ENCODE measurements at regions of chr6 and their contacts with region 1.

Region 1: DNA sequence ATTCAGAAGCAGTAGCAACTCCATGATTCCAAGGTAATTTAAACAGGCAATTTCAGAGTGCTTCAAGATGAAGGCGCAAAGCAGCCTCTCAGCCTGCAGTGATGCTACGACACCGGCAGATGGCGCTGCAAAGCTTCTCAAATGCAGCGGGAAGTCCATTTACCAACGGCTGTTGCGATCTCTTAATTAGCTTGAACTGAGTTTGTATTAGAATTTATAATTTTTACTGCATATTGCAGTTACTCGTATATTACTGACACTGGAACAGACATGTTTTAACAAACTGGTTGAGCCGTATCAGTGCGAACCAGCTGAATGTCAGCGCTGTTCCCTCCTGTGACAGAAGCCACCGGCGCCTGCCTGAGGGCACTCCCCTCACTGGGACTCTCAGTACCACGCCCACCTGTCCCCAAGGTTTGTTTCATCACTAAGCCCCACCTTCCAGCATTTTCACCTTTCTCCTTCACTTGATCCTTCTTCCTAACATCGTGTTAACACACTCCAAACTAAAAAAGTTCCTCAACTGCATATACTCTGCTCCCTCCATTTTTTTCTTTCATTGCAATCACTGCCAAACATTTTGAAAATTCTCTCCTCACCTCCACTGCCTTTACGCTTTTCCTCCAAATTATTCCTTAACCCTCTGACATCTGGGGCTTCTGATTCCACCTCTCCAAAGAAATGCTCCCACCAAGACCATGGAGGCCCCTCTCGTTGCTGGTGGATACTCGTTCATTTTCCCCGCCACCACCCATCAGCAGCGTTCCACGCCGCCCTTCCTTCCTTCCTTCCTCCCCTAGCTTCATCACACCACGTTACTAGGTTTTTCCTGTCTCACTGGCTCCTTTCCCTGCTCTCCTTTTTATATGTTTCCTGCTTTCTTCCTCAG is 14.5 kb downstream of the GNL1 start:
- DNase-seq: peak; percentile 62
- ATAC-seq: peak; percentile 88
- H3K4me3 ChIP-seq: peak overlapping the region; percentile 60
- H3K27ac ChIP-seq: no peak overlapping the region
- H3K4me1 ChIP-seq: peaks cover 7% of the 10 kb centered on the region; the same call in 1 of the 2 replicates
- H3K27me3 ChIP-seq: no peaks in the 10 kb centered on the region
- CTCF ChIP-seq: peak; percentile 94 to 99 (median 96)
- EP300 ChIP-seq: no peak
- POLR2A ChIP-seq: no peak
- RAD21 ChIP-seq: peak; percentile 68

Region 2: DNA sequence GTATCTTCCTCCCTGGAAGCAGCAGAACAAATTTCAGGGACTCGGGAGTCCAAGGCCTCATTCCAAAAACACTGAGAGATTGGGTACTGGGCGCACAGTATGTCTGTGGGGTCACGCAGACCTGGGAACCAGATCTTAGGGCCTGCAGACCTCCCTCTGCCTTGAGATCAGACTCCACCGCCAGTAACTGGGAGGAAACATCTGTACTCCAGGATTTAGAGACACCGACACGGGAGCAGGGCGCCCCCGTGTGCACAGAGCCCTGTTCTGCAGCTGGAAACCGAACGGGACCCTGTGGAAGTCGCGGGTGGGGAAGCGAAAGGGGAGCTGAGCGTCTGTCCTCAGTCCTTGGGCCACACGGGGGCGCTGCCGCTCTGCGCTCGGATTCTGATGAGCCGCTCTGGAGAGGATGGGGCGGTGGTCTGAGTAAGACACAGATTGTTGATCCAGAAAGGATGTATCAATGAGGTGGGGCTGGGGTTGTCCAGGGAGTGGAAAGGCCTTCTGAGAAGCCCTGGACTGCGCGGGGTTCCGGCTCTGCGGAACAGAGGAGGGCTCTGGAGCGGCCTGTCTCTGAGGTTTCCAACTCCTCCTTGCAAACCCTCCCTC is 88.1 kb before region 1 on chr6:
- CTCF ChIA-PET with region 1: interaction called, 16 read pairs
- POLR2A ChIA-PET with region 1: interaction called, 3 read pairs
- RAD21 ChIA-PET with region 1: interaction called, 4 read pairs
- SMC1A ChIA-PET with region 1: interaction called, 4 read pairs
- in situ Hi-C with region 1: no loop called
- intact Hi-C with region 1: no loop called
- DNase-seq: no peak
- ATAC-seq: peak; percentile 94
- H3K4me3 ChIP-seq: no peak overlapping the region
- H3K27ac ChIP-seq: no peak overlapping the region
- H3K4me1 ChIP-seq: peaks cover 18% of the 10 kb centered on the region
- H3K27me3 ChIP-seq: peaks cover 13 to 23% of the 10 kb centered on the region in 2 experiments
- CTCF ChIP-seq: peak; percentile 54 to 78 (median 65)
- EP300 ChIP-seq: no peak
- POLR2A ChIP-seq: no peak
- RAD21 ChIP-seq: peak; percentile 53

Region 3: DNA sequence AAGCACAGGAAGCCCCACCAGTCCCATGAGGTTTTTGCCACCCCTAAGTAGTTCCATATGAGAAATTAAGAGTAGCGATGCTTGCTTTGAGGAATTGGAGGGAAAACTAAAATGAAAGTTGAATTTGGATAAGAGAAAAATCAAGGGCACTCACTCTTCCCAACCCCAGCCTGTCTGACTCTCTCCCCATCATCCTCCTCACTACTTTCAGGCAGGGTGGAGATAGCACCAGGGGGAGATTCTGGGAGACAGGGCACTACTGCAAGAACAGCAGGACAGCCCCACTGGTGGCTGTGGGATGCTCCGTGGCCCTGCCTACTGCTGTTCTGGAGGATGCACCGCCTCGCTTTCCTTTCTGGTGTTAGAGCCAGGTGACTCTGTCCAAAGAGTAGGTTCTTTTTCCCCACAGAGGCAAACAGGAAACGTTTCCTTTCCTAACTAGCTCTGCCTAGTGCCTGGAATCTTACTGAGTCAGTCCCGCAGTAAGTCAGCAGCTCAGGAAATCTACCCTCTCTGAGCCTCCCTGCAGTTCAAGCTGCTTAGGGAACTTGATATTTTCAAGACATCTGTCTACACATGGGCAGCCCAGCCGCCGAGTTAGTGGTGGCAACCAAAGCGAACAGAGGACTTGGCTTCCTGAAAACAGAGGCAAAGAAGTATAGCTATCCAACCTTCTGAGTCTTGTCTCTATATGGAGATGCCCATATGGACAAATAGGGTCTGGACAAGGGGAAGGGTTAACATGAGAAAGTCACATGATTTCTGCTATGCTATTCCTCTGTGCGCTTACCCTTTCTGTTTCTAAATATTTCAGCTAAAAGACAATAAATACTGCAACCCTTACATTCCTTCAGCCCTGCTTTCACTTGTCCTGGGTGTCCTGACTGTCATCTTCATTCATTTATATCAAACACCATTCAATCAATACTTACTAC is 41.1 kb before region 1 on chr6:
- CTCF ChIA-PET with region 1: interaction called, 20 read pairs
- POLR2A ChIA-PET with region 1: interaction called, 3 read pairs
- RAD21 ChIA-PET with region 1: interaction called, 3 read pairs
- SMC1A ChIA-PET with region 1: interaction called, 6 read pairs
- in situ Hi-C with region 1: no loop called
- intact Hi-C with region 1: no loop called
- DNase-seq: no peak
- ATAC-seq: peak; percentile 29
- H3K4me3 ChIP-seq: no peak overlapping the region
- H3K27ac ChIP-seq: no peak overlapping the region
- H3K4me1 ChIP-seq: peaks cover 9% of the 10 kb centered on the region
- H3K27me3 ChIP-seq: no peaks in the 10 kb centered on the region; a peak in 1 of 4 replicates
- CTCF ChIP-seq: no peak
- EP300 ChIP-seq: no peak
- POLR2A ChIP-seq: no peak
- RAD21 ChIP-seq: no peak

Region 4: DNA sequence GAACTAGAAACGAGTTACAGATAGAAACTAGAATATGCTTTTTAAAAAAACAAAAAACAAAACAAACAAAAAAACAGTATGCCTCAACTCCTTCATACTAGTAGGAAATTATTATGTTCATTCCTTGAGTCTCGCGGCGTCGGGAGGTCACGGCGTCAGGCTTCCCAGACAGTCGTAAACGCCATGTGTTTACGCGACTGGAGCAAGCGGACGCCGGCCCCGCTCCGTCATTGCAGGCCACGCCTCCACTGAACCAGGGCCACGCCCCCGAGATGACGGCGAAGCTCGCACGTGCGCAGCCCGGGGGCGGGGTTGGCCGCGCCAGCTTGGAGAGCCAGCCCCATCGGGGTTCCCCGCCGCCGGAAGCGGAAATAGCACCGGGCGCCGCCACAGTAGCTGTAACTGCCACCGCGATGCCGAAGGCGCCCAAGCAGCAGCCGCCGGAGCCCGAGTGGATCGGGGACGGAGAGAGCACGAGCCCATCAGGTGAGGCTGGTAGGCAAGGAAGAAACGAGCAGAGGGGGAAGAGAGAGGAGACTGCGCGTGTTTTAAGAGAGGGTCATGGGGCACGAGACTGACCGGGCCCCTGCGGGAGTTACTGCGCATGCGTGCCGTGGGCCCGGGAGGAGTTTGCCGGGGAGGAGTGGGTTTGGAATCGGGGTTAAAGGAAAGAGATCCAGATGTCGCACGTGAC is 29.5 kb after region 1 on chr6 and contains the start of gene ABCF1:
- CTCF ChIA-PET with region 1: interaction called, 25 read pairs
- POLR2A ChIA-PET with region 1: no interaction called
- RAD21 ChIA-PET with region 1: interaction called, 11 read pairs
- SMC1A ChIA-PET with region 1: interaction called, 4 read pairs
- in situ Hi-C with region 1: no loop called
- intact Hi-C with region 1: no loop called
- DNase-seq: peak; percentile 85
- ATAC-seq: peak; percentile 94
- H3K4me3 ChIP-seq: peak within 1 kb of the TSS; percentile 89
- H3K27ac ChIP-seq: peak within 1 kb of the TSS; percentile 94
- H3K4me1 ChIP-seq: peaks cover 15% of the 10 kb centered on the region
- H3K27me3 ChIP-seq: no peaks in the 10 kb centered on the region
- CTCF ChIP-seq: no peak
- EP300 ChIP-seq: 0 out of 4 replicates have a peak, but pooled peaks of 1 of the 2 experiments have one; percentile 23
- POLR2A ChIP-seq: peak; percentile 96
- RAD21 ChIP-seq: no peak
- polyA plus RNA-seq, gene ABCF1: 21.3 to 26.1 TPM

Region 5: GRCh38 chr6:30616811-30617564 is 75.2 kb after region 1 on chr6 and contains the start of gene PPP1R10:
- CTCF ChIA-PET with region 1: interaction called, 17 read pairs
- POLR2A ChIA-PET with region 1: interaction called, 3 read pairs
- RAD21 ChIA-PET with region 1: interaction called, 8 read pairs
- SMC1A ChIA-PET with region 1: interaction called, 6 read pairs
- in situ Hi-C with region 1: no loop called
- intact Hi-C with region 1: no loop called
- DNase-seq: peak; percentile 100
- ATAC-seq: peak; percentile 81
- H3K4me3 ChIP-seq: peak within 1 kb of the TSS; percentile 80
- H3K27ac ChIP-seq: peak within 1 kb of the TSS; percentile 99
- H3K4me1 ChIP-seq: peaks cover 3% of the 10 kb centered on the region
- H3K27me3 ChIP-seq: no peaks in the 10 kb centered on the region
- CTCF ChIP-seq: no peak
- EP300 ChIP-seq: no peak; a peak in 1 of 4 replicates
- POLR2A ChIP-seq: peak; percentile 97
- RAD21 ChIP-seq: no peak
- polyA plus RNA-seq, gene PPP1R10: 11.3 to 22.6 TPM

Region 6: DNA sequence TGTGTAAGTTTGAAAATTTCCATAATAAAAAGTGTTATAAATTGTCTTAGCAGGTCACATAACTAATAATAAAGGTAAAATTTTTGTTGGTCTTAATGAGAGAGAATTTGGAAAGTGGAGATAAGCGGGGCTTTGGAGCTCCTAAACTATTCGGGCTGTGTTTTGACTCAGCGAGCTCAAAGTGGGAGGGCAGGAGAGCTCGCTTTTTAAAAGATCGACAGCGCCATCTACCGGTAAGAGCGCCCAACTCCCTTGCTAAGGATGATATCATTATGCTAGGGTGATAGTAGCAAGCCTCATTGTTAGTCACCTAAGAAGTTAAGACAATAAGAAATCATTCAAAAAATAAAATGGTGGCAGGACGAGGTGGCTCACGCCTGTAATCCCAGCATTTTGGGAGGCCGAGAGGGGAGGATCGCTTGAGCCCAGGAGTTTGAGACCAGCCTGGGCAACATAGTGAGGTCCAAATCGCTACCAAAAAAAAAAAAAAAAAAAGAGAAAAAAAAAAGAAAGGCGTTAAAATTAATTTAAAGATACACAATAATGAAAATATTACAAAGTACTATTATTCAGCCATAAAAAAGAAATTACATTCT is 545.8 kb after region 1 on chr6:
- CTCF ChIA-PET with region 1: interaction called, 14 read pairs
- POLR2A ChIA-PET with region 1: no interaction called
- RAD21 ChIA-PET with region 1: interaction called, 6 read pairs
- SMC1A ChIA-PET with region 1: interaction called, 8 read pairs
- in situ Hi-C with region 1: no loop called
- intact Hi-C with region 1: loop called (anchors 2 kb)
- DNase-seq: peak; percentile 25
- ATAC-seq: peak; percentile 98
- H3K4me3 ChIP-seq: no peak overlapping the region
- H3K27ac ChIP-seq: no peak overlapping the region
- H3K4me1 ChIP-seq: no peaks in the 10 kb centered on the region
- H3K27me3 ChIP-seq: no peaks in the 10 kb centered on the region; a peak in 1 of 4 replicates
- CTCF ChIP-seq: peak; percentile 67 to 72 (median 71)
- EP300 ChIP-seq: no peak
- POLR2A ChIP-seq: no peak
- RAD21 ChIP-seq: peak; percentile 71

Region 7: DNA sequence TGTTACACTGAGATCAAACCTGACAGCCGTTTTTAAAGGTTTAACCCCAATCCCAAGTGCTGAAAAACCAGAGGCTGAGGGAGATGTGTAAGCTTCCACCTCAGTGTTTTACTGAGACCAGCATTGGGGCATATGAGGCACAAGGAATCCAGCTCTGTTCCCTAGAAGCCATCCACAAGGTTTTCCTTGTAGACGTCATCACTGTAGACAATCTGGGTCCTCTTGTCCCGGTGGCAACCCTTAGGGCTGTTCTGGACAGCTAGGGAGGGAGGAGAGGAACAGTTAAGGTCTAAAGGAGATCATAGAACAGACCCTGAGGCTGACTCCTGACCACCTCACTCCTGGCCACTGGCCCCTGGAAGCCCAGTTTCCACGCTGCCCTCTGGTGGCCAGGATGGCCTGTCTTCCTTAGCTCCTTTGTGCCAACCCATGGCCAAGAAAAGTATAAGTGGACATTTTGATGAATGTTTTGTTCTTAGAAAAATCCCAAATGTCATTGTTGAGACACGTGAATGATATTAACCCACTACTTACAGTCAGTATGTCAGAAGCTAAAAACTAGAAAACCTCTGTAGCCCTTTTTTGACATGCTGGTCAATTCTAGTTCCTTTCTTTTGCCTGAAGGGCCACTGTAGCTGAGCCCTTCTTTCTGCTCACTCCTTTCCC is 1410.5 kb after region 1 on chr6:
- CTCF ChIA-PET with region 1: no interaction called
- POLR2A ChIA-PET with region 1: no interaction called
- RAD21 ChIA-PET with region 1: no interaction called
- SMC1A ChIA-PET with region 1: no interaction called
- in situ Hi-C with region 1: no loop called
- intact Hi-C with region 1: no loop called
- DNase-seq: no peak
- ATAC-seq: peak; percentile 71
- H3K4me3 ChIP-seq: no peak overlapping the region
- H3K27ac ChIP-seq: no peak overlapping the region
- H3K4me1 ChIP-seq: no peaks in the 10 kb centered on the region
- H3K27me3 ChIP-seq: no peaks in the 10 kb centered on the region
- CTCF ChIP-seq: peak; percentile 45 to 59 (median 47)
- EP300 ChIP-seq: no peak
- POLR2A ChIP-seq: no peak
- RAD21 ChIP-seq: peak; percentile 36; the same call in 1 of the 2 replicates

Measured in GM12878 (cell line).